Adrenal gland (tissue), 19 donors: ENCODE measurements at regions of chr2 and their contacts with region 1.

Region 1: DNA sequence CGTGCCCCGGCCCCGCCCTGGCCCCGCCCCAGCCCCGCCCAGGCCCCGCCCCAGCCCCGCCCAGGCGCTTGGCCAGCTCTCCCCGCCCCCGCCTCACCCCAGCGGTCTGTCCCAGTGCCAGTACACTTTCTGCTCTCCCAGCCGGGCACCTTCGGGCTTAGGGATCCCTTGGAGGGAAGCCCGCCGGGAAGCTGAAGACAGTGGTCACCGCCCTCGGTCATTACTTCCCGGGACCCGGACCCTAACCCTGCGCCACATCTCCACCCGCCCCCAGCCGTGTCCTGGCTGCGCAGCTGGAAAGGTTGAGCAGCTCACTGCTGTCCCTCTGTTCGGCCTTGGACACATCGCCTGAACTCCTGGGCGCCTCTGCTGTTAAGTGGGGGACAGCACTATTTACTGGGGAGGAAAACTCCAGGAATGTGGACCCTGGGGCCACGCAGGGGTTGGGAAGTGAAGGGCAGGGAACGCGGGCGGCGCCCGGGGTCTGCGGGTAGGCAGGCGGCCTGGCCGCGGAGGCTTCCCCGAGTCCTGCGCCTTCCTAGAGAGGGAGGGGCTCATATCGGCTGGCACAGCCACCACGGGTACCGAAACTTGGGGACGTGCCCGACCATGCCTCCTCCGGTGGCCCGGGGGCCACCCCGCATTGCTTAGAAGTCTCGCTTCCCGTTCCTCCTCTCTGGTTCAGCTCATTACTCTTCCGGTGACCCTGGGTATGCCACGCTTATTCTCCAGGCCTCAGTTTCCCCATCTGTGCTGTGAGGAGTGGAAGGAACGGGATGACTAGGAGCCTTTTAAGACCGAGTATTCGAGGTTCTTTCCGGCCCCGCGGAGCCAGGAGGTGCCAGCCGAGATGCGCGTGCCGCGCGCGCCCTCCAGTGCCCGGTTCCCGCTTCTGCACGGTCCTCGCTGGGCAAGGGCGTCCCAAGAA is 121.0 kb downstream of the GYPC start:
- DNase-seq: peak; percentile 68 to 91 (median 84)
- H3K4me3 ChIP-seq: peak overlapping the region in 2 of 4 donors; percentile 39 to 75
- H3K27ac ChIP-seq: peak overlapping the region in 3 of 5 donors; percentile 29 to 74 (median 54)
- H3K4me1 ChIP-seq: no peaks in the 10 kb centered on the region
- H3K27me3 ChIP-seq: no peaks in the 10 kb centered on the region
- CTCF ChIP-seq: peak; percentile 88 to 97 (median 96)
- POLR2A ChIP-seq: no peak

Region 2: GRCh38 chr2:126244937-126245336 is 532.0 kb before region 1 on chr2:
- intact Hi-C with region 1: loop called (anchors 10 kb)
- DNase-seq: peak; percentile 21 to 72 (median 41)
- H3K4me3 ChIP-seq: no peak overlapping the region
- H3K27ac ChIP-seq: no peak overlapping the region
- H3K4me1 ChIP-seq: no peaks in the 10 kb centered on the region
- H3K27me3 ChIP-seq: no peaks in the 10 kb centered on the region
- CTCF ChIP-seq: peak in 4 of 6 experiments; percentile 10 to 42 (median 36)
- POLR2A ChIP-seq: no peak

Region 3: DNA sequence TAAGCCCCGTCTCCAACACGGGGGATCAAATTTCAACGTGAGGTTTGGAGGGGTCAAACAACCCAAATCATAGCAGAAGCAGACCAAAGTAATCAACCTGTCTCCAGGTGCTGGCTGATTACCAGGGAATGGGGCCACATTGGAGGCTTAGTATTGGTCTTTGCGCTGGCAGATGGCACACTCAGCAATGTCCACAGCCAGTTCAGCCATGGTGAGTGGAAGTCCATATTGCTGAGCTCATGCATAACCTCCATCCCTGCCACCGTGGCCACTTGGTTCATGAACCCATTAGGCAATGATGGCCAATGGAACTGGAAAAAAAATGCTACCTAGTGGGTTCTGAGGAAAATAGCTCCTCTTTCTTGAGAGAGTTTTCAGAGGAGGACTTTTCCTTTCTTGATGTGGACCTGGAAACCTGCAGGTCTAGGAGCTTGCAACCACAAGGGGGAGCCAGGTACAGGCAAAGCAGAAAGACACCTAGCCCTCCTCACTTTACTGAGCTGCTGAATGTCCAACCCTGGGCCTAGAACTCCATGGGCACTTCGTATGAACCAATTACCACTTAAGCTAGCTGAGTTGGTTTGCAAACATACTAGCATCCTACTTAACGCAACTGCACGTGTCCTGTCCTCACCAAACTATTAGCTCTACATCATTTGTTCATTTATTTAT is 249.0 kb before region 1 on chr2:
- intact Hi-C with region 1: loop called (anchors 5 kb)
- DNase-seq: peak; percentile 58 to 89 (median 80)
- H3K4me3 ChIP-seq: no peak overlapping the region
- H3K27ac ChIP-seq: no peak overlapping the region
- H3K4me1 ChIP-seq: no peaks in the 10 kb centered on the region
- H3K27me3 ChIP-seq: no peaks in the 10 kb centered on the region
- CTCF ChIP-seq: peak; percentile 42 to 75 (median 62)
- POLR2A ChIP-seq: no peak

Region 4: DNA sequence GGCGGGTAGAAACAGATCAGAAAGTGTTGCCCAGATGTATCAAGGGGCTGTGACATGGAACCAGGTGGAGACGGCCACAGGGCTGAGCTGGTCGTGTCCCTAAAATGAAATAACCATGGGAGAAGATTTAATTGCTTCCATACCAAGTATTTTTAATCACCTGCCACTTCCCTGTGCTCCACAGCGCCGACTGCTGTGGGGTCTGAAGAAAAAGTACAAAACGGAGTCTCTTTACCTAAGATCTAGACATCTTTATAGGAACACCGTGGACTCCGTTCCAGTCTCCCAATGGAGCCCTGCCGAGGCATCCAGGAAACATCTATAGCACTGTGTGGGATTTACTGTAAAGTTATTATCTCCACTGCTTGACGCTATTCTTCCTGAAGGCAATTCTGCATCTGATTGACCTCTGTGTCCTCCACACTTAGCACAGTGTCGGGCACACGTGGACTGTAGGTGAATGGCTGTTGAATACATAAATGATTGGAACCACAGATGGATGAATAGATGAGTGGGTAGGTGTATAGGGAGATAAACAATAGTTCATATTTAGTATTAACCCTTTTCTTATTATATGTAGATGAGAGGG is 142.6 kb before region 1 on chr2:
- intact Hi-C with region 1: loop called in 1 of 2 experiments (anchors 10 kb)
- DNase-seq: peak in 3 of 7 donors; percentile 28 to 36 (median 29)
- H3K4me3 ChIP-seq: no peak overlapping the region
- H3K27ac ChIP-seq: peak overlapping the region in 1 of 5 donors; percentile 38
- H3K4me1 ChIP-seq: no peaks in the 10 kb centered on the region
- H3K27me3 ChIP-seq: no peaks in the 10 kb centered on the region
- CTCF ChIP-seq: peak; percentile 25 to 57 (median 46)
- POLR2A ChIP-seq: no peak